Naive thymus-derived CD4-positive, alpha-beta T cell (primary cell): ENCODE measurements at regions of chr6 and their contacts with region 1.

Region 1: DNA sequence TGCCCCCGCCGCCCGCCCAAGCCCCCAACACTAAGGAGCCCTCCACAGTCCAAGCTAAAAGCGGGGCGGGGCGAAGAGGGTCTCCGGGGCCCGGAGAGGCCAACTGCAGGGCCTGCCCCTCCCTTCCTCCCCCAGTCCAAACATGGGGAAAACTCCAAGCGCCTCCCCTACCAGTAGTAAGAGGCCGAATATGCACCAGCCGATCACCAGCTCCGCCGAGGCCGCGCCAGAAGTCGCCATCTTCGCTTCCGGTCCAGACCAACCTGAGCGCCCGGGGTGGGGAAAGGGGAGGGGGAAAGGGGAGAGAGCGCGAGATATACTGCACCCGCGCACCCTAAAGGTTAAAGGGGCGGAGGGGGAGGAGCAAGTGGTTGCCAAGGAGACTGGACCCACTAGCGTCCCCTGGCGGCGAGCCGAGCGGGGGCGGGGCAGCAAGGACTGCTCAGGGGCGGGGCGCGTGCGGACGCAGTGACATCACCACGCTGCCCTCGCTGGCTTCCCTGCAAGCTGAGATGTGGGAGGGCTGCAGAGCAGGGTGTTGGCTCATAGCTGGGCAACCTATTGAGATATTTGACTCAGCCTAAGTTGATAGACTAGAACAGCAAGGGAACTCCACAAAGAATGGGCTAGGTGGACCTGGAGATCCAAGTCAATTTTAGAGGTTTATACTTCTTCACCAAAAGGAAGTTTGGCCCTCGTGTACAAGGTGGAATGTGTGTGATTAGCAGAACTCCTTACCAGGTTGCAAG is at the start of gene LMBRD1:
- DNase-seq: peak; percentile 98 to 100 (median 99)
- ATAC-seq: peak; percentile 95
- H3K4me3 ChIP-seq: peak within 1 kb of the TSS; percentile 62
- H3K4me3 Mint-ChIP-seq: peak within 1 kb of the TSS; percentile 89 to 99 (median 96)
- H3K27ac ChIP-seq: peak within 1 kb of the TSS; percentile 96
- H3K27ac Mint-ChIP-seq: peak within 1 kb of the TSS; percentile 89 to 100 (median 97)
- H3K4me1 ChIP-seq: peaks cover 9 to 13% of the 10 kb centered on the region in 2 donors
- H3K4me1 Mint-ChIP-seq: peaks cover 27 to 60% (median 50%) of the 10 kb centered on the region in 7 donors
- H3K27me3 ChIP-seq: no peaks in the 10 kb centered on the region
- H3K27me3 Mint-ChIP-seq: no peaks in the 10 kb centered on the region
- total RNA-seq, gene LMBRD1: 27.4 to 49.1 (median 41.7) TPM

Region 2: DNA sequence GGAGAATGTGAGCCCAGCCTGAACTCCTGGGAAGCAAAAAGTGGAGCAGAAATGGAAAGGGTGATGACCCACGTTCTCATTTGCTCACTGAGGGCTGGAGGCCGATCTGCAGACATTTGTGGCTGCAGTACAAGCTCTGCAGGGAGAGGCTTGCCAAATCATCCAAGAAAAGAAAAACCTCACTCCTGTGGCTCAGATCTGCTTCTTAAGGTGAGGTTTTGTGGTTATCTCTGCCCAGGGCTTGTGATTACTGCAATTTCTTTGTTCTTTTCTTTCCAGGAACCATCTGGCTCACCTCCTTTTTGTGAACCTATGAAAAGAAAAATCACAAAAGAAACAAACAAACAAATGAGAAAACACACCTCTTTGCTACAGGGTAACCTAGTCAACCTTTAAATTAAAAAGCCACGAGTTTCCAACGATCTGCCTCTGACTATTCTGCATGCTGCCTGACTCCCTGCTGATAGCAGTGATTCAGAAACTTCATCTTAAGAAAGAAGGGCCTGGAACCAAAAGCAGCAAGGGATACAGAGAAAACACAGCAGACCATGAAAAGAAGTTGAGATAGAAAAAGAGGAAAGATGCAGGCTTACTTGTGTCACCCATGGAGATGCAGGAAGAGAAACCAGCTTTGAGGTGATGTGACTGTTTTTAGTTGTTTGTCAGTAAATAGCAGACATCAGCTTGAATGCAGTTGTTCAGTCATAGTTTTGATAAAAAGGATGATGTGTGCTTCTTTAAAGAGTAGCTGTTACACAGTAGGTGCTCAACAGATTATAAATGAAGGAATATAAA is 165.1 kb before region 1 on chr6:
- CTCF ChIA-PET with region 1: no interaction called
- POLR2A ChIA-PET with region 1: no interaction called
- intact Hi-C with region 1: loop called in 1 of 2 experiments (anchors 5 kb)
- DNase-seq: no peak
- ATAC-seq: no peak
- H3K4me3 ChIP-seq: no peak overlapping the region
- H3K4me3 Mint-ChIP-seq: peak overlapping the region in 1 of 10 donors; percentile 50
- H3K27ac ChIP-seq: no peak overlapping the region
- H3K27ac Mint-ChIP-seq: peak overlapping the region in 1 of 9 donors; percentile 72
- H3K4me1 ChIP-seq: no peaks in the 10 kb centered on the region
- H3K4me1 Mint-ChIP-seq: peaks cover 2 to 19% (median 10%) of the 10 kb centered on the region in 7 donors
- H3K27me3 ChIP-seq: no peaks in the 10 kb centered on the region
- H3K27me3 Mint-ChIP-seq: peaks cover 10 to 26% (median 23%) of the 10 kb centered on the region in 5 donors

Region 3: DNA sequence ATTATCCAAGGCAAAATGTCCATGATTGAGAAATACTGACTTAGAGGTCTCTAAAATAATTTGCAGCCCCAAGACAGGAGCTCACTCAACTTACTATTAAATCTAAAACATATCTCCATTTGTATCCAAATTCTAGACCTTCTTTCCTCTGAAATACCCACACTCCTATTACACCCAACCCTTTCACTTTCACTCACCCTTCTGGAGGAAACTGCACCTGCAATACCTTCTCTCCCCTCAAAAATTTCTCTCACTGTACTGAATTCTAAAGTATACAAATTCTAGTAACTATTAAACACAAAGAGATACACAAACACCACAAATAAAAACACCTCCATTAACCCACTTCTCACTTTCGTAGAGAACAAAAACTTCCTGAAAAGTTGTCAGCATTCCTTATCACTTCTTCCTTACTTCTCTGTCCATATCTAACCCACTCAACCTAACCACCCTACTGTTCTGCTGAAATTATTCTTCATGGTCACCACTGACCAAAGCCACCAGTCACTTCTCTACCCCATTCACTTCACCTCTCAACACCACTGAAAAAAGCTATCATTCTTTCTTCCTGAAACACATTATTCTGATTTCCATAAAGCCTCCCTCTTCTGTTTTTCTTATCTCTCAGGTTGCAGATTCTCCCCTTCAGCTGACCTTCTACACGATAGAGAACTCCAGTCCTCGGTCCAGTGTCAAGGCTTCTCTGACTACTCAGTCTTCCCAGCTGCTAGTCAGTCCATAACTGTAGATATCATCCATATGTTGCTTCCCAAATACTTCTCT is 12.0 kb before region 1 on chr6:
- CTCF ChIA-PET with region 1: interaction called, 3 read pairs
- POLR2A ChIA-PET with region 1: interaction called, 6 read pairs
- intact Hi-C with region 1: loop called in 1 of 2 experiments (anchors 1 kb)
- DNase-seq: no peak
- ATAC-seq: peak; percentile 20
- H3K4me3 ChIP-seq: no peak overlapping the region
- H3K4me3 Mint-ChIP-seq: peak overlapping the region in 7 of 10 donors; percentile 1 to 67 (median 5)
- H3K27ac ChIP-seq: no peak overlapping the region
- H3K27ac Mint-ChIP-seq: peak overlapping the region in 5 of 9 donors; percentile 3 to 41 (median 8)
- H3K4me1 ChIP-seq: peaks cover 5 to 19% of the 10 kb centered on the region in 2 donors
- H3K4me1 Mint-ChIP-seq: peaks cover 31 to 74% (median 58%) of the 10 kb centered on the region in 7 donors
- H3K27me3 ChIP-seq: no peaks in the 10 kb centered on the region
- H3K27me3 Mint-ChIP-seq: no peaks in the 10 kb centered on the region

Region 4: DNA sequence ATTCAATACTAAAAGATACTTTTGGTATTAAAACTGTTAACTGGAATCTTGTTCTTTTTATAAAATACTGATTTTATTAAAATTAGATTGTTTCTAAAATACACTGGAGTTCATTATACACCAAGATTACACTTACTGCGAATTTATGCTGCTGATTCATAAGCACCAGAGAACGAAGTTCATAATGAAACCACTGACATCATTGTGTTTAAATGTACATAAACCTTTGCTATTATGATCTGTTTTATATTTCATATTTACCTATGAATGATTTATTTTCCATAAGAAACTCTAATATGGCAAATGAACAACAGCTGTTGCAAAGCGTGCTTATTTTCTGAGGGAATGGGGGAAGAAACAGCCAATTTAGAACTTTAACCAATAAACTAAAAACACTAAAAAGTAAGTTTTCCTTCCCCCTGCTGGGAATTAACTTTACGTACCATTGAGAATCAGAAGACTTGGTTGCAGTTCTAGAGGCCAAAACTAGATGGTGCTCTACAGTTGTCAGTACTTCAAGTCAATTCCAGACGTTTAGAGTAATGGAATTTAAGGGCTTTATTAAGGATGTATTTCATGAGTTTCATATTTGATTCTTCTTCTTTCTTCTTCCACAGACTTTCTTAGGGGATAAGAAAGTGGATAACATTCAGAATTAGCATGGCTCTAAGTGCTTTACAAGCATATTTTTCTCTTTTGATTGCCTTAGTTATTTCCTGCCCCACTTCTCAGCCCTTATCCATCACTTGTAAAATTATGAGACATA is 38.8 kb after region 1 on chr6:
- CTCF ChIA-PET with region 1: interaction called, 4 read pairs
- POLR2A ChIA-PET with region 1: no interaction called
- intact Hi-C with region 1: loop called (anchors 1 to 5 kb)
- DNase-seq: peak in 4 of 9 donors; percentile 11 to 41 (median 26)
- ATAC-seq: peak; percentile 84
- H3K4me3 ChIP-seq: no peak overlapping the region
- H3K4me3 Mint-ChIP-seq: peak overlapping the region in 1 of 10 donors; percentile 21
- H3K27ac ChIP-seq: no peak overlapping the region
- H3K27ac Mint-ChIP-seq: no peak overlapping the region
- H3K4me1 ChIP-seq: no peaks in the 10 kb centered on the region
- H3K4me1 Mint-ChIP-seq: peaks cover 0 to 7% (median 2%) of the 10 kb centered on the region in 7 donors
- H3K27me3 ChIP-seq: no peaks in the 10 kb centered on the region
- H3K27me3 Mint-ChIP-seq: peaks cover 0 to 52% (median 11%) of the 10 kb centered on the region in 5 donors

Region 5: DNA sequence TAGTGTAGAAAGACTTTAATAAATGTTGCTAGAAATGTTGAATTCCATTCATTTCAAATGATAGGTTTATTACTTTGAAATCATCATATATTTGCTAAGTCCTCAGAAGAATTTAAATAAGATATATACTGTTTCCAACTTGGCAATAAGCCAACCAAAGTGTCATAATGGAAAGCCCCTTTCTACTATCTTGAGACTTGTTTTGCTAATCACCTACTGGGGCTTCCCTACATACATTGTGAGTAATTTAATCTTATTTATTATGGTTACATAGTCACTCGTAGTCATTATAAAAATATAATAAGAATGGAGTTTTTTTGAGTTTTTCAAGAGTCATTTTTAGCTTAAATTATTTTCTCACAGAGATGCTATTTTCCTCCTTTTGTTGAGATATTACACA is 90.2 kb after region 1 on chr6:
- CTCF ChIA-PET with region 1: no interaction called
- POLR2A ChIA-PET with region 1: no interaction called
- intact Hi-C with region 1: no loop called
- DNase-seq: peak in 1 of 9 donors; percentile 16
- ATAC-seq: no peak
- H3K4me3 ChIP-seq: no peak overlapping the region
- H3K4me3 Mint-ChIP-seq: no peak overlapping the region
- H3K27ac ChIP-seq: no peak overlapping the region
- H3K27ac Mint-ChIP-seq: no peak overlapping the region
- H3K4me1 ChIP-seq: no peaks in the 10 kb centered on the region
- H3K4me1 Mint-ChIP-seq: peaks cover 0 to 1% (median 0%) of the 10 kb centered on the region in 7 donors
- H3K27me3 ChIP-seq: peaks cover 0 to 4% of the 10 kb centered on the region in 2 donors
- H3K27me3 Mint-ChIP-seq: peaks cover 6 to 20% (median 12%) of the 10 kb centered on the region in 5 donors

Region 6: DNA sequence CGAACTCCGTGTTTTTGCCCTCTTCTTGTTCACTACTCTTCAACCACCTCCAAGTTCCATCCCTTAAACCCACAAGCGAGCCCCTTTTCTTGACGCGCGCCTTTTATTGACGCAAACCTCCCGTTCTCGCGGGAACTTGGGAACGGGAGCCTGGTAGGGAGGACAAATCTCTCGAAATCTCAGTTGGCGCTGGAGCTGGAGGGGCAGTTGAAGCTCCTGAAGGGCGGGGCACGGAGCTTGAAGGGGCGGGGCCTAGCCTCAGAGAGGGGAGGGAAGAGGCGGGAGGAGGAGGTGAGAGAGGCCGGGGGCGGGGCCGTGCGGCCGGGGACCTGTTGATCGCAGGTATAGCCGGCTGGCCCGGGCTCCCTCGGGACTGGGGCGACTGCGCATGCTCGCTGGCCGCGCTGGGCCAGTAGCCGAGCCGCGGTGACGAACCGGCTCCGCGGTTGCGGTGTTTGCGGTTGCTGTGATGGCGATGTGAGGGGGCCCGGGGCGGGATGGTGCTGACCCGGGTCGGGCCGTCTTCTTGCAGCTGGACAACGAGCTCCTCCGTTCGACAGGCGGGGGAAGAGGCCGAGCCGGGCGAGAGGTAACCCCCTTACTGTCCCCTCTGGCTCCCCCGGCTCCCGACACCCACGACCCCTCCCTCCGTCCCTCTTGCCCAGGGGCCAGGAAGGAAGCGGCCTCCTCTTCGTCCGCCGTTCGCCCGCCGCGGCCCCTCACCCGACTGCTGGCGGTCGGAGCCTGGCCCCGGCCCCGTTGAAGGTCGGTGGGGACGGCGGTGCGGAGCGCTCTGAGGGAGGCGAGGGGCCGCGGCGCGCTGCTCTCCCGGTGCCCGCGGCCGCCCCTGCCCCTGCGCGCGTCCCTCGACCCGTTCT is 616.5 kb after region 1 on chr6 and contains the start of gene FAM135A:
- CTCF ChIA-PET with region 1: interaction called, 4 read pairs
- POLR2A ChIA-PET with region 1: no interaction called
- intact Hi-C with region 1: loop called (anchors 1 to 2 kb)
- DNase-seq: peak; percentile 80 to 94 (median 89)
- ATAC-seq: peak; percentile 98
- H3K4me3 ChIP-seq: peak within 1 kb of the TSS; percentile 79
- H3K4me3 Mint-ChIP-seq: peak within 1 kb of the TSS; percentile 91 to 99 (median 94)
- H3K27ac ChIP-seq: peak within 1 kb of the TSS; percentile 69
- H3K27ac Mint-ChIP-seq: peak within 1 kb of the TSS; percentile 82 to 96 (median 92)
- H3K4me1 ChIP-seq: peaks cover 0 to 4% of the 10 kb centered on the region in 2 donors
- H3K4me1 Mint-ChIP-seq: peaks cover 7 to 27% (median 26%) of the 10 kb centered on the region in 7 donors
- H3K27me3 ChIP-seq: no peaks in the 10 kb centered on the region
- H3K27me3 Mint-ChIP-seq: peaks cover 0 to 18% (median 0%) of the 10 kb centered on the region in 5 donors
- total RNA-seq, gene FAM135A: 6.8 to 15.4 (median 12.3) TPM

Region 7: DNA sequence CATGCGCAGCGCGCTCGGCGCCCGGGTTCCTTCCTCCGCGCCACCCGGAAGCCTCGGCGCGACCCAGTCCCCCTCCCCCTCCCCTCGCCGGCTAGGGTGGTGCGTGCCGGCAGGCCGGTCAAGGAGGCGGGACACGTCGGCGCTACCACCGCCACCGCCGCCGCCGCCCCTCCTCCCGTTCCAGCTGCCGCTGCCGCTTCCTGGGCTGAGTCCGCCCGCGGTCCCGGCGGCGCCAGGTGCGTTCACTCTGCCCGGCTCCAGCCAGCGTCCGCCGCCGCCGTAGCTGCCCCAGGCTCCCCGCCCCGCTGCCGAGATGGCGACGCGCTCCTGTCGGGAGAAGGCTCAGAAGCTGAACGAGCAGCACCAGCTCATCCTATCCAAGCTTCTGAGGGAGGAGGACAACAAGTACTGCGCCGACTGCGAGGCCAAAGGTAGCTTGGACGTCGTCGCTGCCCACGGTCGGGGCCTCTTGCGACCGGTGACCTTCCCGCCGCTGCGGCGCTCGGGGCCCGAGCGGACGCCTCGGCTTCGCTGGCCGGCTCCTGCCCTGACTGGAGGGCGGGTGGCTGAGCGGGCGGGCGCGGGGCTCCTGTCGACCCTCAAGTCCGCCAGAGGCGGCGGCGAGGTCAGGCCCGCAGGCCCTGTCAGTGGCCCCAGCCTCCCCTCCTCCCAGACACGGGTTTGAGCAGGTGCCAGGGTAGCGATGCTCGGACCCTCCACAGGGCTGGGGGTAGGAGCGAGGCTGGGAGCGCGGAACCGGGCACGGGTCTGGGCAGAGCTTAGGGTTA is 871.1 kb after region 1 on chr6 and contains the start of gene SMAP1:
- CTCF ChIA-PET with region 1: no interaction called
- POLR2A ChIA-PET with region 1: interaction called, 3 read pairs
- intact Hi-C with region 1: loop called (anchors 2 kb)
- DNase-seq: peak; percentile 84 to 96 (median 90)
- ATAC-seq: peak; percentile 97
- H3K4me3 ChIP-seq: peak within 1 kb of the TSS; percentile 69
- H3K4me3 Mint-ChIP-seq: peak within 1 kb of the TSS; percentile 83 to 96 (median 90)
- H3K27ac ChIP-seq: peak within 1 kb of the TSS; percentile 82
- H3K27ac Mint-ChIP-seq: peak within 1 kb of the TSS; percentile 92 to 98 (median 95)
- H3K4me1 ChIP-seq: peaks cover 23 to 26% of the 10 kb centered on the region in 2 donors
- H3K4me1 Mint-ChIP-seq: peaks cover 40 to 58% (median 55%) of the 10 kb centered on the region in 7 donors
- H3K27me3 ChIP-seq: no peaks in the 10 kb centered on the region
- H3K27me3 Mint-ChIP-seq: no peaks in the 10 kb centered on the region
- total RNA-seq, gene SMAP1: 18.7 to 45.7 (median 20.8) TPM